Naive thymus-derived CD4-positive, alpha-beta T cell (primary cell): ENCODE measurements at regions of chr7 and their contacts with region 1.

Region 1: GRCh38 chr7:37352974-37353948 is 95.4 kb downstream of the ELMO1 start:
- DNase-seq: peak; percentile 37 to 90 (median 82)
- ATAC-seq: peak; percentile 91
- H3K4me3 ChIP-seq: peak overlapping the region; percentile 93
- H3K4me3 Mint-ChIP-seq: peak overlapping the region; percentile 84 to 98 (median 95)
- H3K27ac ChIP-seq: peak overlapping the region; percentile 75
- H3K27ac Mint-ChIP-seq: peak overlapping the region; percentile 86 to 97 (median 92)
- H3K4me1 ChIP-seq: peaks cover 15 to 44% of the 10 kb centered on the region in 2 donors
- H3K4me1 Mint-ChIP-seq: peaks cover 71 to 97% (median 93%) of the 10 kb centered on the region in 7 donors
- H3K27me3 ChIP-seq: no peaks in the 10 kb centered on the region
- H3K27me3 Mint-ChIP-seq: no peaks in the 10 kb centered on the region

Region 2: GRCh38 chr7:35465791-35466336 is 1887.4 kb before region 1 on chr7:
- CTCF ChIA-PET with region 1: no interaction called
- POLR2A ChIA-PET with region 1: no interaction called
- intact Hi-C with region 1: no loop called
- DNase-seq: no peak
- ATAC-seq: no peak
- H3K4me3 ChIP-seq: no peak overlapping the region
- H3K4me3 Mint-ChIP-seq: no peak overlapping the region
- H3K27ac ChIP-seq: no peak overlapping the region
- H3K27ac Mint-ChIP-seq: no peak overlapping the region
- H3K4me1 ChIP-seq: no peaks in the 10 kb centered on the region
- H3K4me1 Mint-ChIP-seq: no peaks in the 10 kb centered on the region
- H3K27me3 ChIP-seq: no peaks in the 10 kb centered on the region
- H3K27me3 Mint-ChIP-seq: peaks cover 9 to 64% (median 39%) of the 10 kb centered on the region in 5 donors

Region 3: GRCh38 chr7:36487756-36488336 is 865.4 kb before region 1 on chr7:
- CTCF ChIA-PET with region 1: no interaction called
- POLR2A ChIA-PET with region 1: no interaction called
- intact Hi-C with region 1: loop called (anchors 2 to 5 kb)
- DNase-seq: peak in 7 of 9 donors; percentile 47 to 72 (median 61)
- ATAC-seq: peak; percentile 78
- H3K4me3 ChIP-seq: no peak overlapping the region
- H3K4me3 Mint-ChIP-seq: no peak overlapping the region
- H3K27ac ChIP-seq: no peak overlapping the region
- H3K27ac Mint-ChIP-seq: peak overlapping the region in 1 of 9 donors; percentile 81
- H3K4me1 ChIP-seq: no peaks in the 10 kb centered on the region
- H3K4me1 Mint-ChIP-seq: peaks cover 0 to 9% (median 3%) of the 10 kb centered on the region in 7 donors
- H3K27me3 ChIP-seq: no peaks in the 10 kb centered on the region
- H3K27me3 Mint-ChIP-seq: peaks cover 0 to 22% (median 0%) of the 10 kb centered on the region in 5 donors

Region 4: GRCh38 chr7:37234928-37235327 is 118.3 kb before region 1 on chr7:
- CTCF ChIA-PET with region 1: interaction called, 21 read pairs
- POLR2A ChIA-PET with region 1: interaction called, 3 read pairs
- intact Hi-C with region 1: loop called (anchors 1 kb)
- DNase-seq: peak in 6 of 9 donors; percentile 13 to 45 (median 33)
- ATAC-seq: peak; percentile 32
- H3K4me3 ChIP-seq: no peak overlapping the region
- H3K4me3 Mint-ChIP-seq: no peak overlapping the region
- H3K27ac ChIP-seq: no peak overlapping the region
- H3K27ac Mint-ChIP-seq: peak overlapping the region in 2 of 9 donors; percentile 1 to 10
- H3K4me1 ChIP-seq: no peaks in the 10 kb centered on the region
- H3K4me1 Mint-ChIP-seq: peaks cover 12 to 33% (median 24%) of the 10 kb centered on the region in 7 donors
- H3K27me3 ChIP-seq: no peaks in the 10 kb centered on the region
- H3K27me3 Mint-ChIP-seq: no peaks in the 10 kb centered on the region

Region 5: GRCh38 chr7:37342688-37343471 is 10.4 kb before region 1 on chr7:
- CTCF ChIA-PET with region 1: interaction called, 8 read pairs
- POLR2A ChIA-PET with region 1: interaction called, 35 read pairs
- intact Hi-C with region 1: loop called (anchors 1 kb)
- DNase-seq: peak; percentile 44 to 82 (median 73)
- ATAC-seq: peak; percentile 93
- H3K4me3 ChIP-seq: peak overlapping the region; percentile 55
- H3K4me3 Mint-ChIP-seq: peak overlapping the region; percentile 78 to 98 (median 88)
- H3K27ac ChIP-seq: peak overlapping the region; percentile 69
- H3K27ac Mint-ChIP-seq: peak overlapping the region; percentile 92 to 99 (median 95)
- H3K4me1 ChIP-seq: peaks cover 17 to 51% of the 10 kb centered on the region in 2 donors
- H3K4me1 Mint-ChIP-seq: peaks cover 33 to 93% (median 75%) of the 10 kb centered on the region in 7 donors
- H3K27me3 ChIP-seq: no peaks in the 10 kb centered on the region
- H3K27me3 Mint-ChIP-seq: no peaks in the 10 kb centered on the region

Region 6: DNA sequence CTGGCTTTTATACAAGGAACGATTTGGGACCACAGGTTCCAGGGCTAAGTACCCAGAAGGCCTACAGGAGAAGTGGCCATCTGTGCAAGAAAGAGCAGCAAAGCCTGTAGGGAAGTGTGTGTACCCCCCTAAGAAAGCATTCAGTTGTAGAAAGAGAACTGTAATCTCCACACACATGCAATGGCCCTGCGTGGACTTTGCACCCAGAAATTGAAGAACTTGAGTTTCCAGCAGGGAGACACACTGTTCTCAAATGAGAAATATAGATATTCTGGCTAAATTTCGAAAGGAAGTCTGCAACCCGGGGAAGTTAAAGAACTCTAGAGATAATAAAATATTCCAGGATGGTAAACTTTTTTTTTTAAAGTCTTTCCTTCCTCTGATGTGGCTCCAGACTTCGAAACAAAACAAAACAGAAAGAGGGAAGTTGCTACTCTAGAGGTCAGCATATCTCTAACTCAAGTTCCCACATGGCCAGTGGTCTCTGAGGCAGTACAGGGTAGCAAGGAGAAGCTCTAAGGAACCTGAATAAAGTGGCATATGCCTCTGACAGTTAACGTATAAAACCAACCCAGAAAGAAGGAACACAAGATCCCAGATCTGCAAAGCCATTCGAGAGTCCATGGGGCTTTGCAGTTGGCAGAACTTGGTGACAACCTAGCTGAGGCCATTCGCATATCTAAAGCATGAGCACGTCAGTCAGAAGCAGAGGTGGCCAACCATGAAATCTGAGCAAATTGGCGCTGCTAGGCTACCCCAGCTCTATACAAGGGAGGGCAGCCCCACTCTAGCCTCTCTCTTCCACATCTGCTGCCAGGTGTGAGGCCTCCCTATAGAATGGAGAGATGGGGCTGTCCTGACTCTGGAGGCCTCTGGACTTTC is 38.8 kb after region 1 on chr7:
- CTCF ChIA-PET with region 1: no interaction called
- POLR2A ChIA-PET with region 1: no interaction called
- intact Hi-C with region 1: no loop called
- DNase-seq: no peak
- ATAC-seq: peak; percentile 67
- H3K4me3 ChIP-seq: no peak overlapping the region
- H3K4me3 Mint-ChIP-seq: peak overlapping the region in 3 of 10 donors; percentile 29 to 56 (median 47)
- H3K27ac ChIP-seq: no peak overlapping the region
- H3K27ac Mint-ChIP-seq: peak overlapping the region in 5 of 9 donors; percentile 32 to 90 (median 73)
- H3K4me1 ChIP-seq: peaks cover 0 to 21% of the 10 kb centered on the region in 2 donors
- H3K4me1 Mint-ChIP-seq: peaks cover 43 to 79% (median 61%) of the 10 kb centered on the region in 7 donors
- H3K27me3 ChIP-seq: no peaks in the 10 kb centered on the region
- H3K27me3 Mint-ChIP-seq: no peaks in the 10 kb centered on the region

Region 7: DNA sequence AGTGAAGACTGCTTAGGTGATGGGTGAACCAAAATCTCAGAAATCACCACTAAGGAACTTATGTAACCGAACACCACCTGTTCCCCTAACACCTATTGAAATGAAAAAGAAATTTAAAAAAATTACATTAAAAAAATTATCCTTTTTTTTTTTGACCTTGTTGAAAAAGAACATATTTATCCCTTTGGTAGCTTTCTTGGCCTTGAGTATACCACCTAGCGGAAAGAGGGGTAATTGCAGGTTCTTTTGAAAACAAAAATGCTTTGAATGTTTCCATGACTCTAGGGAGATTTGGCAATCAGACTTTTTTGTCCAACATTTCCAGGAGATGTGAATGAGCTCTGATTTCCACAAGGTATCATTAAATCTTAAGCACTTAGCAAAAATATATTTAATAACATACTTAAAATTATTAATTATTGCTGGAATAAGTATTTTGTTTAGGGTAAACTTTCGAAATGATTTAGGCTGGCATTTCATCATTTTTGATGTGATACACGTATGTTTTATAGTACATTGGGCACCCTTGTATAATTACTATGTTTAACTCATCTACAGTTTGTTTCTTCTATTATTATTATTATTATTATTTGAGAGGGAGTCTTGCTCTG is 142.4 kb after region 1 on chr7:
- CTCF ChIA-PET with region 1: interaction called, 6 read pairs
- POLR2A ChIA-PET with region 1: no interaction called
- intact Hi-C with region 1: loop called (anchors 1 to 5 kb)
- DNase-seq: peak in 6 of 9 donors; percentile 16 to 46 (median 36)
- ATAC-seq: peak; percentile 60
- H3K4me3 ChIP-seq: no peak overlapping the region
- H3K4me3 Mint-ChIP-seq: no peak overlapping the region
- H3K27ac ChIP-seq: no peak overlapping the region
- H3K27ac Mint-ChIP-seq: no peak overlapping the region
- H3K4me1 ChIP-seq: no peaks in the 10 kb centered on the region
- H3K4me1 Mint-ChIP-seq: peaks cover 0 to 6% (median 0%) of the 10 kb centered on the region in 7 donors
- H3K27me3 ChIP-seq: no peaks in the 10 kb centered on the region
- H3K27me3 Mint-ChIP-seq: no peaks in the 10 kb centered on the region